Activated CD4-positive, alpha-beta memory T cell treated with anti-CD3 and anti-CD28 coated beads, Interleukin-2, amount 10 ng/mL, durations not matched to agents 7 days and 5 days (primary cell): ENCODE measurements at regions of chr11 and their contacts with region 1.

Region 1: DNA sequence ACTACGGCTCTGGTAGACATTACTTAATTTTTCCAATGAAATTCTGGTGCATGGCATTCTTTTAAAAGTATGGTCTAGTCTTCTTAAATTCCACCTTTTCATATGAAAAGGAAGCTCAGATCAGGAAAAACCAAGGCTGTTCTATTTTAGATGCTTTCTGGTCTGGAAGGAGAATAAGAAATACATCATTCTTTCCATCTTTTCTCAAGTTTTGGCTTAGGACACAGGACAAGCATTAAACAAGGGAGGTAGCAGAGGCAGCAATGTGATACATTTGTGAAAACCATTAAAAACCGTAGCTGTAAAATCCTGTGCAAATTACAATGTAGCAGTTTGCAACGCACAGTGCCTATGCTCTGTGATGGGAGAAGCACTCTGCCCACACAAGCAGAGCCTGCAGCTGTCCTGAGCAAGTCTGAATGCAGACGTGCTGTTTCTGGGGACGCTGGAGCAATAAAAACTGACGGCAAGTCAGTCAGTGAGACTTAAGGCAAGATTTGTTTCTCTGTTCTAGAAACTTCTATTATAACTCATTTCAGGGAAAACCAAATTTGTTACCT is 23.7 kb downstream of the NAP1L4 start:
- DNase-seq: no peak
- H3K4me3 Mint-ChIP-seq: no peak overlapping the region
- H3K27ac Mint-ChIP-seq: no peak overlapping the region
- H3K4me1 Mint-ChIP-seq: peaks cover 23% of the 10 kb centered on the region
- H3K27me3 Mint-ChIP-seq: no peaks in the 10 kb centered on the region

Region 2: GRCh38 chr11:2982214-2982613 is 13.8 kb after region 1 on chr11:
- CTCF ChIA-PET with region 1: no interaction called
- POLR2A ChIA-PET with region 1: interaction called, 10 read pairs
- DNase-seq: no peak
- H3K4me3 Mint-ChIP-seq: no peak overlapping the region
- H3K27ac Mint-ChIP-seq: peak overlapping the region; percentile 47
- H3K4me1 Mint-ChIP-seq: peaks cover 57% of the 10 kb centered on the region
- H3K27me3 Mint-ChIP-seq: no peaks in the 10 kb centered on the region

Region 3: GRCh38 chr11:3057069-3057963 is 88.9 kb after region 1 on chr11 and contains the start of gene CARS1:
- CTCF ChIA-PET with region 1: no interaction called
- POLR2A ChIA-PET with region 1: no interaction called
- DNase-seq: peak; percentile 96
- H3K4me3 Mint-ChIP-seq: peak within 1 kb of the TSS; percentile 81
- H3K27ac Mint-ChIP-seq: peak within 1 kb of the TSS; percentile 83
- H3K4me1 Mint-ChIP-seq: peaks cover 47% of the 10 kb centered on the region
- H3K27me3 Mint-ChIP-seq: peaks cover 4% of the 10 kb centered on the region
- total RNA-seq, gene CARS1: 106 to 121 TPM

Region 4: DNA sequence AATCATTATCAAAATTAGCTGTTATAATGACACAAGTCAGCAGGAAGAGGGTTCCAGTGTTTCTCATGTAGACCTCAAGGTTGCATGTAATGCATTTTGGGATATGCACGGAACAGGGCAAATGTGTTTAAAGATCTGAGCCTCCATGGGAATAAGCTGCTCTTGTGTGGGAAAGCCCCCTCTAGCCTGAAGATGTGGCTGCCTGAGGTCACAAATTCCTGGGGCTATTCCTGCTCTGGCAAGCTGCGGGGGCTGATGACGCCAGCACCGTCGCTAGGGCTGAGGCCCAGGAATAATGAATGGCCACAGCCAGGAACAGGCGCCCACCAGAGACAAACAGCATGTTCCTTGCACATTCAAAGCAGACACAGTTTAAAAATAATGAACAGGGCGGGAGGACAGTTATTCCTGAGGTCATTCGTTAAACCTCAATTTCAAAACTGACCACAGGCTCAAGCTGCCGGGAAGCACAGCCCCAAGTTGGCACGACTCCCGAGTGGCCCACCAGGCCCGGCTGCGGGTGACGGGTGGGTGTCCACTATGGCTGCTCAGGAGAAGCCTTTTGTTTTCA is 185.0 kb after region 1 on chr11:
- CTCF ChIA-PET with region 1: no interaction called
- POLR2A ChIA-PET with region 1: no interaction called
- DNase-seq: no peak
- H3K4me3 Mint-ChIP-seq: no peak overlapping the region
- H3K27ac Mint-ChIP-seq: no peak overlapping the region
- H3K4me1 Mint-ChIP-seq: no peaks in the 10 kb centered on the region
- H3K27me3 Mint-ChIP-seq: no peaks in the 10 kb centered on the region